ENCODE measurements at regions of chr3 and their contacts with region 1.

Region 1: GRCh38 chr3:153161138-153161713 is 800 bp upstream of the RAP2B start:
- DNase-seq: peak; percentile 95
- ATAC-seq: peak; percentile 88 to 92

Region 2: GRCh38 chr3:153284282-153284938 is 123.2 kb after region 1 on chr3:
- intact Hi-C with region 1: loop called in 1 of 2 experiments (anchors 5 kb)
- DNase-seq: peak; percentile 64
- ATAC-seq: peak; percentile 87 to 95

Region 3: GRCh38 chr3:153785902-153786301 is 624.7 kb after region 1 on chr3:
- intact Hi-C with region 1: no loop called
- DNase-seq: no peak
- ATAC-seq: no peak

Region 4: DNA sequence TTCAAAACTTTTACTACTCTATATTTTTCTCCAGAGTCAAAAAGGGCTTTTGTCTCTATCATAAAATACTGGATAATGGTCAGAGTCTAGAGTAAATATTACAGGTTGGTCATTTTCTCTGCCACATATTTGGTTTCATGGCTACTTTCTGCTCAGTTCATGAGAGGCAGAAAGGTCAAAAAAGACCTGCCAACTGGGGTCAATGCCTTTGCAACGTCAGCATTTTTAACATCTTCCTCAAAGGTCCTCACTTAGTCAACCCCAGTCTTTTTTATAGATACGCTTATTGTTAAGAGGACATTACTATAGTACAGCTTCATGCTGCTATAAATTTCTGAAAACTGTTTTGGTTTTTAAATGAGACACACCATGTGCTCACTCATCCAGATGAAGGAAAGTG is 647.9 kb after region 1 on chr3:
- intact Hi-C with region 1: no loop called
- DNase-seq: no peak
- ATAC-seq: no peak